ENCODE measurements at regions of chrX and their contacts with region 1.

Region 1: DNA sequence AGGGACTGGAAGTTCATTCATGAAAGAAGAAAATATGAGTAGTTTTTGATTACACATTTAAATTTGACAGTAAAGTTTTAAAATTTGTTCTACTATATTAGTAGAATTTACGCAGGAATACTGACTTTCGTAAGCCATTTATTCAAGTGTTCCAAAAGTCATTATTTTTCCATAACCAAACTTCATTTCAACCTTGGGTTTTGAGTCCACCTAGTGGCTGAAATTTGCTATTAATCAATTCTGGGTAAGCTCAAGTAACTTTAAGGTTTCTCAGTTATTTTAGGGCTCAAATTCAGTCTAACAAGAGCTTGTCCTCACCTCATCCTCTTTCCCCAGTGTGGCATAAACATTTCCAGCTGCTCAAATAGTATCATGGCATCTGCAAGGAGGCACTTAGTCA is 175.4 kb downstream of the SH3BGRL start:
- DNase-seq: no peak

Region 2: DNA sequence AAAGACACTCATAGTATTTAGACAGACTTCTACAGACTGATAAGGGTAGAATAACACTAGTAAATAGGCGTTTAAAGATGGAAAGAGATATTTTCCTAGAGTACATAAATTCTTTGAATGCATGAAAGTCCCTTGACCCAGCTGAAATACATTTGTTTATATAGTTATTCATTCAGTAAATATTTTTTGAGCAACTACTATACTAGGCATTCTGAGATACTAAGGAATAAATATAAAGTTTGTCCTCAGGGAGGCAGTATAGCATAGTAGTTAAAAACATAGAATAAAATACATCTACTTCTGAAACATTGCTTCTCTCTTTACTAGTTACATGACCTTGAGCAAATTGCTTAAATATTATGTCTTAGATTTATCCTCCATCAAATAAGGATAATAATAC is 203.0 kb before region 1 on chrX:
- intact Hi-C with region 1: loop called (anchors 5 kb)
- DNase-seq: no peak

Region 3: DNA sequence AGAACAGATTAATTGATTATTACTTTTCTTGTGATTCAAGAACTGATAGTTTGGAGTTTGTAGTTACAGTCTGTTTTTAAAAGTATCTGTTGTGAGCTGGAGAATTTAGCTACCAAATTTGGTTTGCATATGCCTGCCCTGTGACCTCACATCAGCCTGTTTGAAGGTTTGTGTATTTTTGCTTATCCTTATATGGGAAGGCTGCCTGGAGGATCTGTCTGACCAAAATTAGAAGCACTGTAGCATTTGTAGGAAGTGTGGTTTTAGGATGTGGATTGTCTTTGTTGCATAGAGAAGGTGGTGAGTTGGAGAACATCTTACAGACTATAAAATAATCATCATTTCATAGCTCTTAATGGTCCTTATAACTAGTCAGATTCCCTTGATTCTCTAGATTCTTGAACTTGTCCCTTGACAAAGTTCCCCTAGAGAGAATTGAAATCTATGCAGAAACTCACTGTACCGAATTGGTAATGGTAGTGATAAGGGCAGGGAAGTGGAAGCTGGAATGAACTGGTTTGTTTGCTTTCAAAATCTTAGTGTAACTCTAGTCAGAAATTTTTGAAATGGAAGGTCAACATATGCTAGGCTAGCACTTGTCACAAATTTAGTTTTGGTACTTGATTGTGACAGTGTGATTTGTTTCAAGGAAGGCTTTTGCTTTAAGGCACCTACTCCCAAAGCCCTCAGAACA is 118.2 kb before region 1 on chrX:
- intact Hi-C with region 1: no loop called
- DNase-seq: no peak